ENCODE measurements at regions of chr11 and their contacts with region 1.

Region 1: GRCh38 chr11:131423715-131424114 is 53.3 kb downstream of the NTM start:
- DNase-seq: no peak
- ATAC-seq: no peak
- H3K4me3 ChIP-seq: no peak overlapping the region
- H3K4me3 Mint-ChIP-seq: no peak overlapping the region
- H3K27ac ChIP-seq: no peak overlapping the region
- H3K27ac Mint-ChIP-seq: no peak overlapping the region
- H3K4me1 ChIP-seq: no peaks in the 10 kb centered on the region
- H3K4me1 Mint-ChIP-seq: no peaks in the 10 kb centered on the region
- H3K27me3 ChIP-seq: no peaks in the 10 kb centered on the region
- H3K27me3 Mint-ChIP-seq: peaks cover 8% of the 10 kb centered on the region
- CTCF ChIP-seq: no peak

Region 2: DNA sequence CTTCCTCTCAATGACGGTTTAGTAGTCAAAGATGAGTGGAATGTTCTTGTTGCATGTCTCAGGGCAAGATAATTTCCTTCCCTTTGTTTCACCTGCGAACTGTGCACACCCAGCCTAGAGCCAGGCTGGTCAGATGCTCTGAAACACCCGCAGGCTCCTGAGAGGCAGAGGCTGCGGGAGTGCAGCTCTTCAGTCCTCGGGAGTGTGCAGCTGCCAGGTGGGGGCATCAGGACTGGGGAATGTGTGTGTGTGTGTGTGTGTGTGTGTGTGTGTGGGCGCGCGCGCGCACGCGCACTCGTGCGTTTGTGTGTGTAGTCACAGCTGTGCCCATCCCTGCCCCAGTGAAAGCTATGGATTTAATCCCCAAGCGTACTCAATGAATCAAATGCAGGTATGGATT is 189.5 kb before region 1 on chr11:
- CTCF ChIA-PET with region 1: no interaction called
- POLR2A ChIA-PET with region 1: no interaction called
- intact Hi-C with region 1: no loop called
- DNase-seq: no peak
- ATAC-seq: no peak
- H3K4me3 ChIP-seq: no peak overlapping the region
- H3K4me3 Mint-ChIP-seq: no peak overlapping the region
- H3K27ac ChIP-seq: no peak overlapping the region
- H3K27ac Mint-ChIP-seq: no peak overlapping the region
- H3K4me1 ChIP-seq: no peaks in the 10 kb centered on the region
- H3K4me1 Mint-ChIP-seq: no peaks in the 10 kb centered on the region
- H3K27me3 ChIP-seq: no peaks in the 10 kb centered on the region
- H3K27me3 Mint-ChIP-seq: no peaks in the 10 kb centered on the region
- CTCF ChIP-seq: no peak

Region 3: GRCh38 chr11:131486100-131486499 is 62.4 kb after region 1 on chr11:
- CTCF ChIA-PET with region 1: no interaction called
- POLR2A ChIA-PET with region 1: no interaction called
- intact Hi-C with region 1: loop called in 1 of 2 experiments (anchors 10 kb)
- DNase-seq: no peak
- ATAC-seq: no peak
- H3K4me3 ChIP-seq: no peak overlapping the region
- H3K4me3 Mint-ChIP-seq: no peak overlapping the region
- H3K27ac ChIP-seq: no peak overlapping the region
- H3K27ac Mint-ChIP-seq: no peak overlapping the region
- H3K4me1 ChIP-seq: no peaks in the 10 kb centered on the region
- H3K4me1 Mint-ChIP-seq: no peaks in the 10 kb centered on the region
- H3K27me3 ChIP-seq: no peaks in the 10 kb centered on the region
- H3K27me3 Mint-ChIP-seq: no peaks in the 10 kb centered on the region
- CTCF ChIP-seq: no peak

Measured in CD4-positive, alpha-beta T cell (primary cell).